HepG2 (cell line): ENCODE measurements at regions of chr2 and their contacts with region 1.

Region 1: GRCh38 chr2:86487062-86487461 is 45.9 kb downstream of the KDM3A start:
- DNase-seq: no peak
- ATAC-seq: no peak
- H3K4me3 ChIP-seq: no peak overlapping the region
- H3K27ac ChIP-seq: no peak overlapping the region
- H3K4me1 ChIP-seq: peaks cover 21% of the 10 kb centered on the region
- H3K27me3 ChIP-seq: no peaks in the 10 kb centered on the region
- CTCF ChIP-seq: peak; percentile 33; the same call in 1 of the 2 replicates
- EP300 ChIP-seq: no peak
- POLR2A ChIP-seq: no peak
- RAD21 ChIP-seq: no peak

Region 2: GRCh38 chr2:86453836-86454235 is 33.2 kb before region 1 on chr2:
- CTCF ChIA-PET with region 1: no interaction called
- POLR2A ChIA-PET with region 1: no interaction called
- in situ Hi-C with region 1: no loop called
- intact Hi-C with region 1: loop called (anchors 1 kb)
- DNase-seq: no peak
- ATAC-seq: no peak
- H3K4me3 ChIP-seq: no peak overlapping the region
- H3K27ac ChIP-seq: no peak overlapping the region
- H3K4me1 ChIP-seq: peaks cover 11% of the 10 kb centered on the region
- H3K27me3 ChIP-seq: no peaks in the 10 kb centered on the region
- CTCF ChIP-seq: no peak
- EP300 ChIP-seq: no peak
- POLR2A ChIP-seq: no peak
- RAD21 ChIP-seq: no peak

Region 3: DNA sequence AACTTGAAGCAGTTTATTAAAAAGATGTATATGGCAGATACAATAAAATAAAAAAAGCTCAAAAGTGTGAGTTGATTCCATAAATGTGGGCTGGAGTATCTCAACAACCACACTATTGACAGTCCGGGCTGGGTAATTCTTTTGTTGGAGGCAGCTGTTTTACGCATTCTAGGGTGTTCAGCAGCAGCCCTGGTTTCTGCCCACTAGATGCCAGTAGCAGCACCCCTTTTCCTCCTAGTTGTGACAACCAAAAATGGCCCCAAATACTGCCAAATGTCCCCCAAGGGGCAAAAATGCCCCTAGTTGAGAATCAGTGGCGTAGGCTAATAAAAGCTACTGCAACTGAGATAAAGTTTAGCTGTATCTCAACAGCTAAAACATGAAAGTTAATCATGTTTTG is 31.4 kb after region 1 on chr2:
- CTCF ChIA-PET with region 1: no interaction called
- POLR2A ChIA-PET with region 1: no interaction called
- in situ Hi-C with region 1: no loop called
- intact Hi-C with region 1: no loop called
- DNase-seq: peak; percentile 39
- ATAC-seq: peak; percentile 90
- H3K4me3 ChIP-seq: no peak overlapping the region
- H3K27ac ChIP-seq: no peak overlapping the region
- H3K4me1 ChIP-seq: no peaks in the 10 kb centered on the region
- H3K27me3 ChIP-seq: no peaks in the 10 kb centered on the region
- CTCF ChIP-seq: peak; percentile 74
- EP300 ChIP-seq: no peak
- POLR2A ChIP-seq: no peak
- RAD21 ChIP-seq: peak; percentile 70